Naive thymus-derived CD4-positive, alpha-beta T cell (primary cell): ENCODE measurements at regions of chr12 and their contacts with region 1.

Region 1: GRCh38 chr12:19462406-19462805 is 23.1 kb downstream of the AEBP2 start:
- DNase-seq: no peak
- ATAC-seq: no peak
- H3K4me3 ChIP-seq: no peak overlapping the region
- H3K4me3 Mint-ChIP-seq: peak overlapping the region in 2 of 10 donors; percentile 18 to 30
- H3K27ac ChIP-seq: no peak overlapping the region
- H3K27ac Mint-ChIP-seq: peak overlapping the region in 5 of 9 donors; percentile 42 to 71 (median 57)
- H3K4me1 ChIP-seq: no peaks in the 10 kb centered on the region
- H3K4me1 Mint-ChIP-seq: peaks cover 17 to 67% (median 49%) of the 10 kb centered on the region in 7 donors
- H3K27me3 ChIP-seq: no peaks in the 10 kb centered on the region
- H3K27me3 Mint-ChIP-seq: no peaks in the 10 kb centered on the region

Region 2: GRCh38 chr12:19447386-19447785 is 15.0 kb before region 1 on chr12:
- CTCF ChIA-PET with region 1: no interaction called
- POLR2A ChIA-PET with region 1: no interaction called
- intact Hi-C with region 1: loop called in 1 of 2 experiments (anchors 2 kb)
- DNase-seq: no peak
- ATAC-seq: no peak
- H3K4me3 ChIP-seq: no peak overlapping the region
- H3K4me3 Mint-ChIP-seq: peak overlapping the region in 6 of 10 donors; percentile 10 to 41 (median 20)
- H3K27ac ChIP-seq: no peak overlapping the region
- H3K27ac Mint-ChIP-seq: no peak overlapping the region
- H3K4me1 ChIP-seq: peaks cover 21 to 29% of the 10 kb centered on the region in 2 donors
- H3K4me1 Mint-ChIP-seq: peaks cover 46 to 93% (median 77%) of the 10 kb centered on the region in 7 donors
- H3K27me3 ChIP-seq: no peaks in the 10 kb centered on the region
- H3K27me3 Mint-ChIP-seq: no peaks in the 10 kb centered on the region